ENCODE measurements at regions of chr14 and their contacts with region 1.

Region 1: DNA sequence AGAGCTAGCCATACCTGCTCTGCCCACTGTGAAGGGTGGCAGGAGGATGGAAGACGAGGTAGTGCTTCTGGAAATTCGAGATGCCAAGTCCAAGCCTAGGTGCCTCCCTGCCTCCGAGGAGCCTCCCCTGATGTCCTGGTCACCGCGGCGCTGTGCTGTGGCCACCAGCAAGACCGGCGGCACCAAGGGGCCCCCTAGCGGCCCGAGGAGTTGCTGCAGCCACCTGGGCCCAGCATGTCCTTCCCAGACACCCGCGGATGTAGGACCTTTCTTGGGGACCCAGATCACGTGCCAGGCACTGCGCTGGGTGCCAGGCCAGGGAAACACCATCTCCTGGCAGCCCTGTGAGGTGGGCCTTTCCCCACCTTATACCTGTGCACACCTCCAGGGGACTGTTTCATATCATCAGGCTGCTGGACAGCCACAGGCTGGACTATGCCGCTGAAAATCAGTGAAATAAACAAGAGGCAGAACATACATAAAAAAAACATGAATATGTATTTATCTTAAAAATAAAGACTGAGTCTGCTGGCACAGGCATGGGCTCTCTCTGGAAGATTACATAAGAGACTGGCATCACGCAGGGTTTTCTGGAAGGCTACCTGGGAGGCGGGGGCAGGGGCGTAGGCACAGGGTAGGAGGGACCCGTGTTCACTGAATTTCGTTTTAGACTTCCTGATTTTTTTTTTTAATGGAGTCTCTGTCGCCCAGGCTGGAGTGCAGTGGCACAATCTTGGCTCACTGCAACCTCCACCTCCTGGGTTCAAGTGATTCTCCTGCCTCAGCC is 15.9 kb upstream of the HHIPL1 start:
- DNase-seq: peak; percentile 43 to 89
- H3K4me3 ChIP-seq: no peak overlapping the region
- H3K27ac ChIP-seq: no peak overlapping the region
- H3K4me1 ChIP-seq: peaks cover 0 to 3% (median 1%) of the 10 kb centered on the region in 4 experiments; a peak in 4 of 7 replicates
- H3K27me3 ChIP-seq: no peaks in the 10 kb centered on the region
- CTCF ChIP-seq: peak in 2 of 3 experiments; percentile 99; a peak in 3 of 4 replicates
- EP300 ChIP-seq: no peak
- POLR2A ChIP-seq: no peak
- RAD21 ChIP-seq: peak; percentile 99

Region 2: DNA sequence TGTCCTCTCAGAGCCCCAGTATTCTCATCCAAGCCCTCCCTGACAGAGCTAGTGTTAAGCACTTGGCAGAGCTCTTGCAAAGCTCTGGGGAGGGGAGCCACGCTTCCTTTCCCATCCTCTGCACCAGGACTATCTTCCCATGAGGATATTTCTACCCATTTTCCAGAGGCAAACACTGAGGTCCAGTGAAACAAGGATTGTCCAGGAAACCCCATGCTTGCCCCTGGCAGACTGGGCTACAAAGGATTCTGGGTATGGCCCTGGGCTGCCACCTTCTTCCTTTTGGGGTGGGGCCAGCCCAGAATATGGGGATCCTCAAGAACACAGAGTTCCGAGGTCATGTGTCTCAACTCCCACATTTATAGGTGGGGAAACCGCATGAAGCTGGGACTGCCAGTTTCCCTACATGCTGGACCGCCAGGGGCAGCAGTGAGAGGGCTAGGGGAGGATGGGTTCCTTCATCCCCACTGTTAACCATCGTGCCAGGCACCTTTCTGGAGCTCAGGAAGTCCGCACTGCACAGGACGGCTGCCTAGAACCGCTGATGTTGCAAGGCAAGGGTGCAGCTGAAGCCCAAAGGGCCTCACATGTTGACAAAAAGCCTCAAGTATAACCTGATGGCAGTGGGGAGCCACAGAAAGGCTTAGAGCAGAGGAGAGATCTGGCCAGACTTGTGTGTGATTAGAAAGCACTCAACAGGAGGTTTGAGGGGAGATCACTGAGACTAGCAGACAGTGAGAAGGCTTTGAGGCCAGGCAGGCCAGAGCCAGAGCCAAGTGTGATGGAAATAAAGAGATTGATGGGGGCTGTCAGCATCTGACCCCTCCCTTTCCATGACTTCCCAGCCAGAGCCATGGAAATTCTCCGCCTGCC is 19.5 kb before region 1 on chr14:
- CTCF ChIA-PET with region 1: interaction called, 23 read pairs
- POLR2A ChIA-PET with region 1: interaction called, 3 read pairs
- DNase-seq: no peak
- H3K4me3 ChIP-seq: no peak overlapping the region
- H3K27ac ChIP-seq: no peak overlapping the region
- H3K4me1 ChIP-seq: peaks cover 0 to 15% (median 6%) of the 10 kb centered on the region in 4 experiments; a peak in 4 of 7 replicates
- H3K27me3 ChIP-seq: peaks cover 0 to 13% (median 8%) of the 10 kb centered on the region in 4 experiments; a peak in 4 of 7 replicates
- CTCF ChIP-seq: no peak
- EP300 ChIP-seq: no peak
- POLR2A ChIP-seq: no peak
- RAD21 ChIP-seq: no peak